Right cardiac atrium (tissue), 5 donors: ENCODE measurements at regions of chr5 and their contacts with region 1.

Region 1: DNA sequence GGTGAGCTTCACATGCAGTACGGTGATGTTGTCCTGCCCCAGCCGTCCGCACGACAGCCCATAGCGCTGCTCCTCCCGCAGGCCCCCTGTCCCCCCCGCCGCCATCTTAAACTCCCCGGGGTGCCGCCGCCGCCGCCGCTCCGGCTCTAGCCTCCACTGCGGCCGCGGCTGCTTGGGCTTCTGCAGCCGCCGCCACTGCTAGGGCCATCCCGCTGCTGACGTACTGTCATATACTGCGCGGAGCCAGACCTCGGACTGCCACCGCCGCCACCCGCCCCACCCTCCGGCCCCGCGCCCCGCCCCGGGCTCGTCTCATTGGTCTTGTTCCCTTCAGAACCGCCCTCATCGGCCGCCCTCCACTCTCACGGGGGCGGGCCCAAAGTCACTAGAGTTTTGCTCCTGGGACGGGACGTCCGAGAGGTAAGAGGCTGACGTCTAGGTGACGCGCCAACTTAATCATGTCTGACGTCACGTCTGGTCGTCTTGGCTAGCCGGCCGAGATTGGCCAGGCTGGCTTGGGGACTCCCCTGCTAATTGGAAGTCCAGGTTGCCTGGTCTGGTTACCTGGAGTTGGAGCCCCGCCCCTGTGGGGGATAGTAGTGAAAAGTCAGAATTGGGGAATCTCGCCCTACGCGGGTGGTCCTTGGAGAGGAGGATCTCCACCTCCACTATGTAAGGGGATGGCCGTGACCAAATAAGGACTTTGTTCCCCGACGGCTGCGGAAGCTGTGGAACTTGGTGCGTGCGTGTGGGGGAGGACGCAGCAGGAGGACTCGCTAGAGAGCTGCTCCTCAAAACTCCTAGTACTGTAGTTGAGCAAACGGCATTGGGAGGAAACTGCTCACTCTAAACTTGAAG is at the start of gene ELL2:
- DNase-seq: peak; percentile 99
- ATAC-seq: peak; percentile 95 to 96
- H3K4me3 ChIP-seq: peak within 1 kb of the TSS; percentile 88
- H3K27ac ChIP-seq: peak within 1 kb of the TSS; percentile 99
- H3K4me1 ChIP-seq: peaks cover 8% of the 10 kb centered on the region
- H3K27me3 ChIP-seq: no peaks in the 10 kb centered on the region
- total RNA-seq, gene ELL2: 31.3 to 75.9 (median 33.1) TPM

Region 2: GRCh38 chr5:95858661-95859326 is 103.1 kb before region 1 on chr5:
- intact Hi-C with region 1: loop called in 3 of 4 experiments (anchors 5 kb)
- DNase-seq: peak; percentile 93 to 96 (median 93)
- ATAC-seq: peak; percentile 77 to 78
- H3K4me3 ChIP-seq: no peak overlapping the region
- H3K27ac ChIP-seq: peak overlapping the region; percentile 90
- H3K4me1 ChIP-seq: peaks cover 9% of the 10 kb centered on the region
- H3K27me3 ChIP-seq: no peaks in the 10 kb centered on the region

Region 3: DNA sequence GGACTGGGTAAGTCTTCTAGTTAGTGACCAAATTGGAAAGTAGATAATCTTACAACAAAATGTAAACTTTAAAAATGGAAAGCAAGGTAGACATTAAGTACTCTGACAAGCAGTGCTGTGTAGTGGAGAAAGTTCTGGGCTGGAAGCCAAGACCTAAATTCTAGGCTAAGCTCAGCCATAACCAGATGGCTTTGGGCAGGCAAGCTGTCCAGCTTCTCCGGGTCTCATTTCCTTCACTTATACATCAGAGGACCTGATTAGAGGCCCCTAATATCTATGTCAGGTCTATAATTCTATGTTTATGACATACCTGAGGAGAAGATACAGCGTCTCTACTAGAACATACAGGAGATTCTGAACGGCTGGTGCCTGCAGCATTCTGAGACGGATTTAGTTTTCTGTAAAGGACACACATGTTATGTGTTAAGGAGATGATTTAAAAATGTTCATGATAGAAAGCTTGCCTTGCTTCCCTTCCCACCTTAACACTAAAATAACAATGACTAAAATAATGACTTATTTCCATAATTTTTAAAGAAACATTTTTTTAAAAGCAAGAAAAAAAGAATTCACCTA is 61.4 kb before region 1 on chr5:
- intact Hi-C with region 1: loop called in 1 of 4 experiments (anchors 5 kb)
- DNase-seq: no peak
- ATAC-seq: peak; percentile 78 to 84
- H3K4me3 ChIP-seq: no peak overlapping the region
- H3K27ac ChIP-seq: no peak overlapping the region
- H3K4me1 ChIP-seq: no peaks in the 10 kb centered on the region
- H3K27me3 ChIP-seq: no peaks in the 10 kb centered on the region

Region 4: GRCh38 chr5:96324708-96325107 is 362.9 kb after region 1 on chr5:
- intact Hi-C with region 1: no loop called
- DNase-seq: no peak
- ATAC-seq: no peak
- H3K4me3 ChIP-seq: no peak overlapping the region
- H3K27ac ChIP-seq: no peak overlapping the region
- H3K4me1 ChIP-seq: no peaks in the 10 kb centered on the region
- H3K27me3 ChIP-seq: no peaks in the 10 kb centered on the region